Ovary (tissue), 10 donors: ENCODE measurements at regions of chr1 and their contacts with region 1.

Region 1: GRCh38 chr1:17125756-17126237 is 6.5 kb upstream of the PADI2 start:
- DNase-seq: peak; percentile 78 to 93 (median 89)
- H3K4me3 ChIP-seq: no peak overlapping the region
- H3K27ac ChIP-seq: no peak overlapping the region
- H3K4me1 ChIP-seq: no peaks in the 10 kb centered on the region
- H3K27me3 ChIP-seq: no peaks in the 10 kb centered on the region
- CTCF ChIP-seq: peak; percentile 68 to 93 (median 76)
- EP300 ChIP-seq: no peak
- POLR2A ChIP-seq: no peak

Region 2: DNA sequence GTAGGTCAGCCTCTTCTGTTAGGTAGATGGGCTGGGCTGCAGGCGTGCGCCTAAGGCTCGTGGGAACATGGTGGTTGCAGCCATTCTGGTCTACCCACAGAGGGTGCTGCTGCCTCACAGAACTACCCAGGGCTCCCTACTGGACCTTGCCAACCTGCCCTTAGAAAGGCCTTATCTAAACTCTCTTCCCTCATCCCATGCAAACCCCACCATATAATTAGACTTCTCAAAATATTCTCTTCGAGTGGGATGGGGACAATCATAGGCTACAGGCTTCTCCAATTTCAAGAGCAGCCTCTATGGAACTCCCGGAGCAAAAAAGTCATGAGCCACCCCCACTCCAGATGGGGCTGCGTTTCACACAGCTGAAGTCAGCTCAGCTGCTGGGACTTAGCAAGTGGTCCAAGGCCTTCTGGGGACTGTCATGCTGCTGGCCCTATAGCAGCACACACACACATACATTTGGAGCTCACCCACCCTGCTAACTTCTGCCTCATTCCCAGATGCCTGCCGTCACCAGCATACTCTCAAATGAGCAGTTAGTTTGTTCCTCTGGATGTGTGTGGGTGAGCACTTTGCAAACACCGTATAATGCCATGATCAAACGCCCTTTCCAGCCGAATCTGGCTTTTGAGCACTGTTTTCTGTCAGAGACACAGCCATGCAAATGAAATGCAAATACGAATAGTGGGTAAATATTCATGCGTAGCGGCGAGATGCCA is 65.9 kb before region 1 on chr1:
- intact Hi-C with region 1: loop called in 1 of 4 experiments (anchors 10 kb)
- DNase-seq: peak; percentile 52 to 68 (median 59)
- H3K4me3 ChIP-seq: no peak overlapping the region
- H3K27ac ChIP-seq: no peak overlapping the region
- H3K4me1 ChIP-seq: no peaks in the 10 kb centered on the region
- H3K27me3 ChIP-seq: no peaks in the 10 kb centered on the region
- CTCF ChIP-seq: peak; percentile 29 to 47 (median 35)
- EP300 ChIP-seq: no peak
- POLR2A ChIP-seq: no peak

Region 3: DNA sequence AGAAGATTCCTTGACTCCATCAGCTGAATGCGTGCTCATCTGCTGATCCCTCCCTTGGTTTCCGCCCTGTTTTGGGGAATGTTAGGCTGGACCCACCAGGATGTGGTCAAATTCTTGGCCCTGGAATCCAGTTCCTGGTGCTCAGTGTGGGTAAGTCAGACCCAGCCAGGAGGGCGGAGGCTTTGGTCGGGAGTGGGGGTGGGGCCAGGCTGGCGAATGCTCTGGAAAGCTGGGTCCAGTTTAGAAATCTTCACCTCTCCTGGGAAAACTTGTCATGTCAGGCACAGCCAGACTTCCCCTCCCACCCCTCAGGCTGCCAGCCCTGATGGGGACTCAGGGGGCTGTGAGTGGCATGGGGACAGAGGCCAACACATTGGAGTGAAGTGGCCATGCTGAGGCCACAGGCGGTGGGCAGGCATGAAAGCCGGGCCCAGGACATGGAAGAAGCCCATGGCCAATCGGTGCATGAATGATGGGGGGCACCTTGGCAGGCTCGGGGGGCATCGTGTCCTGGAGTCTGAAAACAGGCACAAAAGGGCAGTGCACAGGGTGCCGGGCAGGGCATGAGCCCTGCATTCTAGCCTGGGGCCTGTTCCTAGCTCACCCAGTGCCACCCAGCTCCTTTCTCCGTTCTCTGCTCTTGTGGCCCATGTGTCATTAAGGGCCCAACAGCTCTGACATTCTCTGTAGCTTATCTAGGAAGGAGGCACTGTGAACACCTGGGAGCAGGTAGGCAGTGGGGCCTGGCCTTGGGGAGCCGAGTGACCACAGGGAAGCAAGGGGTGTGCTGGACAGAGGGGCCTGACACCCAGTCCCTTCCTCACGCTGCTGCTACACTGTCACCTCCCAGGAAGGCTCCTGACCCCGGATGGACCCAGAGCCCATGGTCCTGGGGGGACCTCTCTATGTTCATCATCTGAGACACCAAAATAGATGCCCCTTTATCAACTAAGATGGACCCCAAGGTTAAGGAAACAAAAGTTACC is 64.5 kb after region 1 on chr1:
- intact Hi-C with region 1: no loop called
- DNase-seq: peak in 1 of 5 donors; percentile 19
- H3K4me3 ChIP-seq: no peak overlapping the region
- H3K27ac ChIP-seq: no peak overlapping the region
- H3K4me1 ChIP-seq: no peaks in the 10 kb centered on the region
- H3K27me3 ChIP-seq: no peaks in the 10 kb centered on the region
- CTCF ChIP-seq: no peak
- EP300 ChIP-seq: no peak
- POLR2A ChIP-seq: no peak

Region 4: GRCh38 chr1:17293681-17294425 is 168.1 kb after region 1 on chr1:
- intact Hi-C with region 1: no loop called
- DNase-seq: no peak
- H3K4me3 ChIP-seq: no peak overlapping the region
- H3K27ac ChIP-seq: no peak overlapping the region
- H3K4me1 ChIP-seq: no peaks in the 10 kb centered on the region
- H3K27me3 ChIP-seq: no peaks in the 10 kb centered on the region
- CTCF ChIP-seq: no peak
- EP300 ChIP-seq: no peak
- POLR2A ChIP-seq: no peak

Region 5: GRCh38 chr1:17335821-17336710 is 210.3 kb after region 1 on chr1:
- intact Hi-C with region 1: loop called in 2 of 4 experiments (anchors 10 kb)
- DNase-seq: peak; percentile 30 to 80 (median 58)
- H3K4me3 ChIP-seq: no peak overlapping the region
- H3K27ac ChIP-seq: no peak overlapping the region
- H3K4me1 ChIP-seq: no peaks in the 10 kb centered on the region
- H3K27me3 ChIP-seq: no peaks in the 10 kb centered on the region
- CTCF ChIP-seq: peak in 2 of 3 donors; percentile 22 to 27
- EP300 ChIP-seq: no peak
- POLR2A ChIP-seq: no peak

Region 6: GRCh38 chr1:17405898-17406759 is 280.3 kb after region 1 on chr1:
- intact Hi-C with region 1: loop called in 2 of 4 experiments (anchors 10 kb)
- DNase-seq: peak; percentile 52 to 77 (median 67)
- H3K4me3 ChIP-seq: no peak overlapping the region
- H3K27ac ChIP-seq: no peak overlapping the region
- H3K4me1 ChIP-seq: no peaks in the 10 kb centered on the region
- H3K27me3 ChIP-seq: no peaks in the 10 kb centered on the region
- CTCF ChIP-seq: peak; percentile 20 to 34 (median 33)
- EP300 ChIP-seq: no peak
- POLR2A ChIP-seq: no peak

Region 7: GRCh38 chr1:17494114-17494729 is 368.4 kb after region 1 on chr1:
- intact Hi-C with region 1: no loop called
- DNase-seq: peak; percentile 43 to 79 (median 68)
- H3K4me3 ChIP-seq: no peak overlapping the region
- H3K27ac ChIP-seq: no peak overlapping the region
- H3K4me1 ChIP-seq: no peaks in the 10 kb centered on the region
- H3K27me3 ChIP-seq: no peaks in the 10 kb centered on the region
- CTCF ChIP-seq: peak; percentile 57 to 69 (median 68)
- EP300 ChIP-seq: no peak
- POLR2A ChIP-seq: no peak